H1 (cell line): ENCODE measurements at regions of chr15 and their contacts with region 1.

Region 1: DNA sequence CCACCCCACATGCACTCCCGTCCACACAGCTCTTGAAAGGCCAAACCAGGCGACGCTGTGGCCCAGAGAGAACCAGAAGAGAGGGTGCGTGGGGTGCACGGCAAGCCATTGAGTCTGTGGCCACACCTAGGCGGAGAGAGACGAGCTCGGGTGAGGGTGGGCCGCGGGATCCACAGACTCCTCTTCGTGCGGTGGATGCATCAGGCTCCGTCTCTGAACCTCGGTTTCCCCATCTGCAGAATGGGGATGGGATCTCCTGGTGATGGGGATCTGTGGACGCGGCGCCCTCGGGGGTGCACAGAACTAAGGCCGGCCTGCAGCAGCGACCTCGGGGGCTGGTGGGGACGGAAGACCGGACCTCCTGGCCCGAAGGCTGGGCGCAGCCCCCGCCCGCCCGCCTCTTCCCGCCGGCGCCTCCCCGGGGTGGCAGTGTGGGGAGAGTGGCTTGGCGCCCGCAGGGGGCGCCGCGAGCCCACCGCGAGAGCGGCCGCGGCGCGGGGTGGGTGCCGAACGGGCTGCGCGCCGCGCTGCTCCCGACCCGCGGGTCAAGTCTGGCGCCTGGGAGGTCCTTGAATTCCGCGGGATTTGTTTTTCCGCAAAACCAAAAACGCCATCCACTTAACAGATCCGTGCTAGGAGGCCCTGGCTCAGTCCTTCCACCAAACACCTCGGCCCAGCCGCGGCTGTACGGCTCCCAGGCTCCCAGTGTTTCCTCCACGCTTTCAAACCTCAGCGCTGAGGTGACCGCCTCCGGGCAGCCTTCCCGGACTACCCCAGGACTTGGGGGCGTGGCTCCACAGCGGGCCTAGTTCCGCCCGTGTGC is 13.2 kb upstream of the ADPGK start:
- DNase-seq: peak in 1 of 2 experiments; percentile 70
- H3K4me3 ChIP-seq: peak overlapping the region; percentile 54 to 71 (median 58)
- H3K27ac ChIP-seq: no peak overlapping the region
- H3K4me1 ChIP-seq: peaks cover 0 to 3% (median 0%) of the 10 kb centered on the region in 4 experiments; a peak in 1 of 7 replicates
- H3K27me3 ChIP-seq: peaks cover 0 to 4% (median 2%) of the 10 kb centered on the region in 4 experiments; a peak in 3 of 7 replicates
- CTCF ChIP-seq: peak; percentile 47 to 79 (median 54)
- EP300 ChIP-seq: no peak
- POLR2A ChIP-seq: no peak
- RAD21 ChIP-seq: peak; percentile 54 to 86

Region 2: DNA sequence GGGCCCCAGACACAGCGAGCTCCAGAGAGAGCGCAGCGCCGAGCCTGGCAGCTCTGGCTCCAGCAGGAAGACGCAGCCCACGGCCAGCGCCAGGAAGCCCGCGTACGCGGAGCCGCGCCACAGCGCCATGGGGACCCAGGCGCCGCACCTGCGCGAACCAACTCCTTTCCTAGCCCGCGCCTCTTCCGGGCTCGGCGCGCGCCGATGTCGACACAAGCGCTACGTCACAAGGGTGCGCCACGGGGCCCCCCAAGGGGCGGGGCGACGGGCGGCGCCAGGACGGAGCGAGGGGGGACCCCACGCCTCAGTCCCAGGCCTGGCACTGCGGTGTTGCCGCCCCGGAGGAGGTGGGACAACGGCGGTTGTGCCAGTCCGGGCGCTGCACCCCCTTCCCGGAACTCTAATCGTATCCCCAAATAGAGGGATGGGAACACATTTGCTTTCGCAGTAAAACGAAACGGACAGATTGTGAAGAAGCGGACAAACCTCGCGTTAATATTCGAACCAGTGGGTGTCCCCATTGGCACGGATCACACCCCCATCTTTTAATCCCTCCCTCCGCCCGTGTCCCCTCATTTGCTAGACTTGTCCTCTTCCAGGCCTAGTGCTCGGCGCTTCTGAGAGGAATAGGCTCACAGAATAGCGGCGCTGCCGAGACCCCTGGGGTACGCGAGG is 13.0 kb before region 1 on chr15 and contains the start of gene ADPGK:
- CTCF ChIA-PET with region 1: interaction called, 21 read pairs
- POLR2A ChIA-PET with region 1: interaction called, 11 read pairs
- DNase-seq: peak; percentile 75 to 99
- H3K4me3 ChIP-seq: peak within 1 kb of the TSS; percentile 79 to 98 (median 89)
- H3K27ac ChIP-seq: peak within 1 kb of the TSS; percentile 87
- H3K4me1 ChIP-seq: peaks cover 0 to 8% (median 2%) of the 10 kb centered on the region in 4 experiments; a peak in 3 of 7 replicates
- H3K27me3 ChIP-seq: no peaks in the 10 kb centered on the region
- CTCF ChIP-seq: no peak
- EP300 ChIP-seq: peak in 1 of 2 experiments; percentile 72; a peak in 1 of 3 replicates
- POLR2A ChIP-seq: peak; percentile 96 to 97
- RAD21 ChIP-seq: peak in 1 of 2 experiments; percentile 11; a peak in 2 of 4 replicates
- total RNA-seq, gene ADPGK: 35.7 and 38.2 TPM in 2 replicates